Heart right ventricle (tissue), 16 donors: ENCODE measurements at regions of chr11 and their contacts with region 1.

Region 1: DNA sequence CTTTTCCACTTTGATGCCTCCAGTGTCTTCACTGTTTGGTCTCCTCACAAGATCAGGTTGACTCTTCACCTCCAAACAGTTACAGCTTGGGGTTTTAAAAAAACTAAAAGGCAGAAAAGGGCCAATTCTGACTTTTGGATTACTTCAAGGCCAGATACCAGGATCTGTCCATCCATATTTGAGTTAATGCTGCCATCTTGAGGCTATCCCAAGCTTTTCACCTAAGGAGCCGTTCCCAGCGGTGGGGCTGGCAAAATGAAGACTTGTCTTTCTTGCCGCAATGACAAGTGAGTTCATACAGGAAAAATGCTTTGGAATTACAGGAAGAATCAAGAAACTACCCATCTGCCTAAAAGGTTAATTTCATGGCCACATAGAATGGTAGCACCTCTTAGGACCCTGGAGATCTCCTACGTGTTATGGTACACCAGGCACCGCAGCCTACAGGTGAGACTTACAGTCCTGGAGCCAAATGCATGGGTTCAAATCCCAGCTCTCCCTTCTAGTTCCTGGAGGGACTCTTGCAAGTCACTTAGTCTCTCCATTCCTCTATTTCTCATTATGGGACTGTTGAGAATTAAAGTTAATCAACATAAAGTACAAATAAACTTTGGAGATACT is 6.0 kb upstream of the OR5B21 start:
- DNase-seq: peak in 1 of 2 donors; percentile 24
- ATAC-seq: peak in 7 of 8 donors; percentile 63 to 82 (median 68)
- H3K4me3 ChIP-seq: no peak overlapping the region
- H3K27ac ChIP-seq: no peak overlapping the region
- H3K4me1 ChIP-seq: peaks cover 0 to 3% (median 0%) of the 10 kb centered on the region in 9 donors
- H3K27me3 ChIP-seq: peaks cover 0 to 19% (median 3%) of the 10 kb centered on the region in 7 donors
- CTCF ChIP-seq: peak; percentile 39 to 76 (median 67)

Region 2: DNA sequence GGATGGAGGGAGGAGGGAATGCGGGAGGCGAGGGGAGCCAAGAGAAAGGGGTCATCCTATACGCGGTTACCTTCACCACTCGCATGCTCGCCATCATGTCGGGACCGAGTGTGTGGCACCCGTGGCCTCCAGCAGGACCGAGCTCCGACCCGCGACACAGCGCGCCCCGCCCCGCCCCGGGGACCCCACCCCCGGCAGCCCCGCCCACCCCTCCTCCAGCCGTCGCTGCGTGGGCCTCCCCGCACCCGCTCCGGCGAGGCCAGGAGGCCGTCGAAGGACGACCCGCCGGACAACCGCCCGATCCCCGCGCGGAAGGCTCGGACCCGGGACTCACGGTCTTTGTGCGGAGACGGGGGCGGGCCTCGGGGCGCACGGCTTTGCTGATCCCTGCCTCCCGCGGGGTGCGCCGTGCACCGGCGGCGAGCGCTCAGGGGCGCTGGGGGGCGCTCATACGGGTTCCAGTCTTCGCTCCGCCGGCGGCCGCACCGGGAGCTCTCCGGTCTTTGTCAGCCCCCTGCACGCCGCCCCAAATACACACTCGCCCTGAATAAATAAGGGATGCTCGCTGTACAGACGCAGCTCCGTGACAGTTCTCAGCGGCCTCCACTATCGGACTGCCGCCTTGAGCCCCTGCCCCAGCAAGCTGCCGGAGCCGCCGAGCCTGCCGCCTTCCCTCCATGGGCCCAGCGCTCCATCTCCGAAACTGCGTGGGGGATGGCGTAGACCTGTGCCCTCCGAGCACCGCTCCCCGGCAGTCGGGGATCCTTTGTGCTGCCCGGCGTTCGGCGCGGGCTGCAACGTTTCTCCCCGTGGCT is 946.1 kb before region 1 on chr11 and contains the start of gene UBE2L6:
- intact Hi-C with region 1: loop called in 1 of 10 experiments (anchors 5 kb)
- DNase-seq: peak; percentile 50 to 67
- ATAC-seq: peak; percentile 75 to 91 (median 85)
- H3K4me3 ChIP-seq: peak within 1 kb of the TSS; percentile 23 to 90 (median 80)
- H3K27ac ChIP-seq: peak within 1 kb of the TSS; percentile 51 to 94 (median 84)
- H3K4me1 ChIP-seq: peaks cover 0 to 52% (median 12%) of the 10 kb centered on the region in 9 donors
- H3K27me3 ChIP-seq: no peaks in the 10 kb centered on the region
- CTCF ChIP-seq: peak in 4 of 9 donors; percentile 78 to 89 (median 86)
- total RNA-seq, gene UBE2L6: 9.7 to 156 (median 17.7) TPM

Region 3: DNA sequence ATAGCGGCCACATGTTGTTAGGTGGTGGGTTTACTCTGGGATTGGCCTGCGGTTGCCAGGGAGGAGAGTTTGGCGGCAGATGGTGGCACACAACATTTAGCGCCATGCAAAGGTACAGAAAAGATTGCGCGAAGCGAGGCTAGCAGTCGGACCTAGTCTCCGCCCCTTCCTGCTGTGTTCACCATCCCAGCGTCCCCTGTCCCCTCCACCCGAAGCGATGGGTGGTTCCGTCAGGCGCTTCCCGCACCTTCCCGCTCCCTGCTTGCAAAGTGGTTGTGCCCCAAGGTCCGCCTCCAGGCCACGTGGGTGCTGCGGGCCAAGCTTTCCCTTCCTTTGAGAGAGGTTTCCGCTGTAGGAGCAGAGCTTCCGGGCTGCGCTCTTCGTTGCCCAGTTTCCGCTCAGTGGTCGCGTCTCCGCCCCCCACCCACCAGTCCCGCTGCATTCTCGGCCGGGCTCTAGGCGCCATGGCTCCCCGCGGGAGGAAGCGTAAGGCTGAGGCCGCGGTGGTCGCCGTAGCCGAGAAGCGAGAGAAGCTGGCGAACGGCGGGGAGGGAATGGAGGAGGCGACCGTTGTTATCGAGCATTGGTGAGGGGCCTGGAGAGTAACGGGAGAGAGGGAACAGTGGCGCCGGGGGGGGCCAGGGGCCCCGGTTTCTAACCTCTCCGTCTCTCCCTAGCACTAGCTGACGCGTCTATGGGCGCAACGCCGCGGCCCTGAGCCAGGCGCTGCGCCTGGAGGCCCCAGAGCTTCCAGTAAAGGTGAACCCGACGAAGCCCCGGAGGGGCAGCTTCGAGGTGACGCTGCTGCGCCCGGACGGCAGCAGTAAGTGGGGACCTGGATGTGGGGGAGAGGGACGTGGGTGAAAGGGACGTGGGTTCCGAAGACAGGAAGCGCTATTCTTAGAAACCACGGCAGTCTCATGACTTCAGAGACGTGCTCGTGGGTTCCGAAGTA is 772.4 kb before region 1 on chr11 and contains the start of gene SELENOH:
- intact Hi-C with region 1: loop called in 1 of 10 experiments (anchors 10 kb)
- DNase-seq: peak; percentile 93 to 95
- ATAC-seq: peak; percentile 97 to 99 (median 98)
- H3K4me3 ChIP-seq: peak within 1 kb of the TSS; percentile 69 to 95 (median 84)
- H3K27ac ChIP-seq: peak within 1 kb of the TSS; percentile 90 to 99 (median 96)
- H3K4me1 ChIP-seq: peaks cover 2 to 32% (median 23%) of the 10 kb centered on the region in 9 donors
- H3K27me3 ChIP-seq: no peaks in the 10 kb centered on the region
- CTCF ChIP-seq: peak in 1 of 9 donors; percentile 8
- total RNA-seq, gene SELENOH: 69.8 to 99.0 (median 77.5) TPM

Region 4: DNA sequence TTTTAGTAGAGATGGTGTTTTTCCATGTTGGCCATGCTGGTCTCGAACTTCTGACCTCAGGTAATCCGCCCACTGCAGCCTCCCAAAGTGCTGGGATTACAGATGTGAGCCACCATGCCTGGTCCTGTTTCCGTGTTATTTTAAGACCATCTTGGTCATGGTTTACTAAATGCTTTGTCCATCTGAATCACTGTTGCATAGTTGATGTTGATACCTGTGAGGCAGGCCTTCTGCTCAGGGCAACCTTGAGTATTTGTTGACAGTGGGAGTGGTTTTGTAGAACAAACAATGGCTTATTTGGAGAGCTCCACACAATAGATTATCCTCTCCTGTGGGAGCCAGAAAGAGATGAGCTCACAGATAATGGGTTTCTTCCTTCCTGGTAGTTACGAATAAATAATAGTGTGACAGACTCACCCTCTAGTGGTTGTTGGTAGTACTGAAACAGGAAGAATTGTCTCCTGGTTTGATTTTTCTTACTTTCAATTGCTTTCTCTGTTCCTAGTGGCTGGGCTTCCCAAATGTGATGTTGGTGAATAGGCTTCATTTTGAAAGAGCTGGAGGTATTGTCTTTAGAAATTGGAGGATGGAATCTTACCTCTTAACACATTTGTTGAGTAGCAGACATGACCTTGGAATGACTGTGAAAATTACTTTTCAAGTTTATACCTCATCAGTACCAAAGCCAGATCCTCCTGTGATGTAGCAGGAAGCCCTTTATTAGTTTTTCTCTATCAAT is 713.2 kb before region 1 on chr11:
- intact Hi-C with region 1: loop called in 1 of 10 experiments (anchors 5 kb)
- DNase-seq: no peak
- ATAC-seq: peak; percentile 58 to 84 (median 72)
- H3K4me3 ChIP-seq: peak overlapping the region in 1 of 10 donors; percentile 1
- H3K27ac ChIP-seq: peak overlapping the region in 9 of 10 donors; percentile 56 to 81 (median 71)
- H3K4me1 ChIP-seq: peaks cover 16 to 73% (median 47%) of the 10 kb centered on the region in 9 donors
- H3K27me3 ChIP-seq: no peaks in the 10 kb centered on the region
- CTCF ChIP-seq: peak; percentile 82 to 94 (median 89)

Region 5: DNA sequence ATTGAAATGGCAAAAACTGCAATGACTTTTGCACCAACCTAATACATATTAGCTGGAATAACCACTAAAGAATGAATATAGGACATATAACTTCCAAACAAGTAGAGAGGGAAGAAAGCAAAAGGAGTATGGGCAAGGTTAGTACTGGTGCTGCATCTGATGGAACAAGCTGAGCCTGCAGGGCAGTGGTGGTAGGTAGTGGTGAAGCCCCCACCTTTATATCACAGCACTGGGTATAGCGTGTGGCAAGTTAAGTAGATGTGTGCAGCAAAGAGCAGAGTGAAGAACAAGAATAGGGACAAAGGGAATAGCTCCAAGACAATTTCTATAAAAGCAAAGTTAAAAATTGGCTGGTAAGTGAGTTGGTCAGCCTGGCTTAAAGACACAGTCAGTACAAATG is 690.0 kb before region 1 on chr11:
- intact Hi-C with region 1: loop called in 2 of 10 experiments (anchors 10 kb)
- DNase-seq: no peak
- ATAC-seq: no peak
- H3K4me3 ChIP-seq: no peak overlapping the region
- H3K27ac ChIP-seq: no peak overlapping the region
- H3K4me1 ChIP-seq: peaks cover 0 to 4% (median 0%) of the 10 kb centered on the region in 9 donors
- H3K27me3 ChIP-seq: no peaks in the 10 kb centered on the region
- CTCF ChIP-seq: no peak

Region 6: GRCh38 chr11:58647141-58647699 is 133.4 kb after region 1 on chr11:
- intact Hi-C with region 1: no loop called
- DNase-seq: no peak
- ATAC-seq: no peak
- H3K4me3 ChIP-seq: no peak overlapping the region
- H3K27ac ChIP-seq: no peak overlapping the region
- H3K4me1 ChIP-seq: peaks cover 0 to 20% (median 4%) of the 10 kb centered on the region in 9 donors
- H3K27me3 ChIP-seq: no peaks in the 10 kb centered on the region
- CTCF ChIP-seq: no peak